Naive thymus-derived CD4-positive, alpha-beta T cell (primary cell): ENCODE measurements at regions of chr17 and their contacts with region 1.

Region 1: GRCh38 chr17:74212913-74213791 is at the start of gene TTYH2:
- DNase-seq: peak; percentile 46 to 78 (median 55)
- ATAC-seq: peak; percentile 81
- H3K4me3 ChIP-seq: peak within 1 kb of the TSS; percentile 62
- H3K4me3 Mint-ChIP-seq: peak within 1 kb of the TSS; percentile 80 to 92 (median 91)
- H3K27ac ChIP-seq: peak within 1 kb of the TSS; percentile 55
- H3K27ac Mint-ChIP-seq: peak within 1 kb of the TSS; percentile 57 to 92 (median 82)
- H3K4me1 ChIP-seq: peaks cover 23 to 37% of the 10 kb centered on the region in 2 donors
- H3K4me1 Mint-ChIP-seq: peaks cover 27 to 51% (median 40%) of the 10 kb centered on the region in 7 donors
- H3K27me3 ChIP-seq: no peaks in the 10 kb centered on the region
- H3K27me3 Mint-ChIP-seq: peaks cover 0 to 5% (median 0%) of the 10 kb centered on the region in 5 donors
- total RNA-seq, gene TTYH2: 5.5 to 15.8 (median 9.9) TPM

Region 2: DNA sequence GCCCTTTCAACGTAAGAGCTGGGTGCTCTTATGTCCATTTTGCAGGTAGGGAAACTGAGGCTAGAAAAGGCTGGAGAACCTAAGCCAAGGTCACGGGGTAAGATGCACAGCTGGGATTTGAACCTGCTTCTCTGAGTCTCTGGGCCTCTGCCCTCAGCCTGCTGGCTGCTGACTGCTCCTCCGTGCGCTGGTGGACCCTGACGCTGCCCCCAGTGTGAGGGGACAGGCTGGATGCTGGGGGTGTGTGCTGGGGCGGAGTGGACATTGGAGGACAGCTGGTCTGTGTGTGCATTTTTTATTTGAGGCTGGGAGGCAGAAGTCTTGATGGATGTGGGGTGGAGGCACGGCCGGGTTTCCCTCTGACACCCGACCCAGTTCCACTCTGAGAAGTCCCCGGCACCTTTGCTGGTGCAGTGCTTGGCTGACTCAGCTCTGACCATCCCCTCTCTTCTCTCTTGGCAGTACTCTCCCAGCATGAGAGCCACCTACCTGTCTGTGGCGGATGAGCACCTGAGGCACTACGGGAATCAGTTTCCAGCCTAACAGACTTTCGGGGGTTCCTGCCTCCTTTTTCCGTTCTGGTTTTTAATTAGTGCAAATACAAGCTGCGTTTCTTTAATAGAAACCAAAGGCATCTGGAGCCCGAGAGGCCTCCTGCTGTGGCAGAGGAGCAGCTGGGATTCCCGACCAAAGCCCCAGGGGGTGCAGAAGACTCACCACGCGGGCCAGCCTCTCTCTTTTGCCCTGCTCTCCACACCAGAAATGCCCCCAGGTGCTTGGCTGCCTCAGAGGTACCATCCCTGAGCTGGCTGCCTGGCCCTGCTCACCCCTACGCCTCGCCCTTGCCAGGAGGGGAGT is 46.7 kb after region 1 on chr17:
- CTCF ChIA-PET with region 1: interaction called, 3 read pairs
- POLR2A ChIA-PET with region 1: no interaction called
- intact Hi-C with region 1: loop called in 1 of 2 experiments (anchors 5 kb)
- DNase-seq: no peak
- ATAC-seq: no peak
- H3K4me3 ChIP-seq: no peak overlapping the region
- H3K4me3 Mint-ChIP-seq: no peak overlapping the region
- H3K27ac ChIP-seq: no peak overlapping the region
- H3K27ac Mint-ChIP-seq: no peak overlapping the region
- H3K4me1 ChIP-seq: no peaks in the 10 kb centered on the region
- H3K4me1 Mint-ChIP-seq: peaks cover 0 to 2% (median 0%) of the 10 kb centered on the region in 7 donors
- H3K27me3 ChIP-seq: no peaks in the 10 kb centered on the region
- H3K27me3 Mint-ChIP-seq: no peaks in the 10 kb centered on the region

Region 3: GRCh38 chr17:74296548-74296936 is 83.4 kb after region 1 on chr17:
- CTCF ChIA-PET with region 1: interaction called, 9 read pairs
- POLR2A ChIA-PET with region 1: interaction called, 3 read pairs
- intact Hi-C with region 1: loop called (anchors 1 kb)
- DNase-seq: no peak
- ATAC-seq: peak; percentile 61
- H3K4me3 ChIP-seq: no peak overlapping the region
- H3K4me3 Mint-ChIP-seq: no peak overlapping the region
- H3K27ac ChIP-seq: no peak overlapping the region
- H3K27ac Mint-ChIP-seq: peak overlapping the region in 2 of 9 donors; percentile 29 to 51
- H3K4me1 ChIP-seq: peaks cover 0 to 8% of the 10 kb centered on the region in 2 donors
- H3K4me1 Mint-ChIP-seq: peaks cover 0 to 25% (median 4%) of the 10 kb centered on the region in 7 donors
- H3K27me3 ChIP-seq: no peaks in the 10 kb centered on the region
- H3K27me3 Mint-ChIP-seq: peaks cover 0 to 9% (median 0%) of the 10 kb centered on the region in 5 donors

Region 4: GRCh38 chr17:74361230-74362068 is 148.3 kb after region 1 on chr17 and contains the start of gene BTBD17:
- CTCF ChIA-PET with region 1: interaction called, 5 read pairs
- POLR2A ChIA-PET with region 1: no interaction called
- intact Hi-C with region 1: loop called in 1 of 2 experiments (anchors 1 kb)
- DNase-seq: peak in 3 of 9 donors; percentile 18 to 56 (median 23)
- ATAC-seq: peak; percentile 63
- H3K4me3 ChIP-seq: no peak within 1 kb of the TSS
- H3K4me3 Mint-ChIP-seq: no peak within 1 kb of the TSS
- H3K27ac ChIP-seq: no peak within 1 kb of the TSS
- H3K27ac Mint-ChIP-seq: peak within 1 kb of the TSS in 1 of 9 donors; percentile 78
- H3K4me1 ChIP-seq: no peaks in the 10 kb centered on the region
- H3K4me1 Mint-ChIP-seq: peaks cover 0 to 11% (median 4%) of the 10 kb centered on the region in 7 donors
- H3K27me3 ChIP-seq: peaks cover 0 to under 1% of the 10 kb centered on the region in 2 donors
- H3K27me3 Mint-ChIP-seq: peaks cover 14 to 26% (median 22%) of the 10 kb centered on the region in 5 donors
- total RNA-seq, gene BTBD17: not detected

Region 5: GRCh38 chr17:74457146-74457819 is 244.1 kb after region 1 on chr17:
- CTCF ChIA-PET with region 1: interaction called, 6 read pairs
- POLR2A ChIA-PET with region 1: no interaction called
- intact Hi-C with region 1: loop called in 1 of 2 experiments (anchors 1 kb)
- DNase-seq: peak; percentile 22 to 72 (median 50)
- ATAC-seq: peak; percentile 68
- H3K4me3 ChIP-seq: no peak overlapping the region
- H3K4me3 Mint-ChIP-seq: peak overlapping the region in 3 of 10 donors; percentile 17 to 30 (median 25)
- H3K27ac ChIP-seq: no peak overlapping the region
- H3K27ac Mint-ChIP-seq: peak overlapping the region in 3 of 9 donors; percentile 18 to 65 (median 30)
- H3K4me1 ChIP-seq: peaks cover 5 to 52% of the 10 kb centered on the region in 2 donors
- H3K4me1 Mint-ChIP-seq: peaks cover 0 to 43% (median 12%) of the 10 kb centered on the region in 7 donors
- H3K27me3 ChIP-seq: no peaks in the 10 kb centered on the region
- H3K27me3 Mint-ChIP-seq: peaks cover 0 to 19% (median 0%) of the 10 kb centered on the region in 5 donors

Region 6: GRCh38 chr17:74528491-74529199 is 315.5 kb after region 1 on chr17:
- CTCF ChIA-PET with region 1: no interaction called
- POLR2A ChIA-PET with region 1: no interaction called
- intact Hi-C with region 1: loop called in 1 of 2 experiments (anchors 5 kb)
- DNase-seq: peak in 1 of 9 donors; percentile 12
- ATAC-seq: peak; percentile 64
- H3K4me3 ChIP-seq: no peak overlapping the region
- H3K4me3 Mint-ChIP-seq: no peak overlapping the region
- H3K27ac ChIP-seq: no peak overlapping the region
- H3K27ac Mint-ChIP-seq: no peak overlapping the region
- H3K4me1 ChIP-seq: no peaks in the 10 kb centered on the region
- H3K4me1 Mint-ChIP-seq: peaks cover 3 to 18% (median 6%) of the 10 kb centered on the region in 7 donors
- H3K27me3 ChIP-seq: no peaks in the 10 kb centered on the region
- H3K27me3 Mint-ChIP-seq: peaks cover 23 to 50% (median 32%) of the 10 kb centered on the region in 5 donors